Activated CD4-positive, alpha-beta T cell treated with anti-CD3 and anti-CD28 coated beads for 36 hours (primary cell): ENCODE measurements at regions of chr9 and their contacts with region 1.

Region 1: DNA sequence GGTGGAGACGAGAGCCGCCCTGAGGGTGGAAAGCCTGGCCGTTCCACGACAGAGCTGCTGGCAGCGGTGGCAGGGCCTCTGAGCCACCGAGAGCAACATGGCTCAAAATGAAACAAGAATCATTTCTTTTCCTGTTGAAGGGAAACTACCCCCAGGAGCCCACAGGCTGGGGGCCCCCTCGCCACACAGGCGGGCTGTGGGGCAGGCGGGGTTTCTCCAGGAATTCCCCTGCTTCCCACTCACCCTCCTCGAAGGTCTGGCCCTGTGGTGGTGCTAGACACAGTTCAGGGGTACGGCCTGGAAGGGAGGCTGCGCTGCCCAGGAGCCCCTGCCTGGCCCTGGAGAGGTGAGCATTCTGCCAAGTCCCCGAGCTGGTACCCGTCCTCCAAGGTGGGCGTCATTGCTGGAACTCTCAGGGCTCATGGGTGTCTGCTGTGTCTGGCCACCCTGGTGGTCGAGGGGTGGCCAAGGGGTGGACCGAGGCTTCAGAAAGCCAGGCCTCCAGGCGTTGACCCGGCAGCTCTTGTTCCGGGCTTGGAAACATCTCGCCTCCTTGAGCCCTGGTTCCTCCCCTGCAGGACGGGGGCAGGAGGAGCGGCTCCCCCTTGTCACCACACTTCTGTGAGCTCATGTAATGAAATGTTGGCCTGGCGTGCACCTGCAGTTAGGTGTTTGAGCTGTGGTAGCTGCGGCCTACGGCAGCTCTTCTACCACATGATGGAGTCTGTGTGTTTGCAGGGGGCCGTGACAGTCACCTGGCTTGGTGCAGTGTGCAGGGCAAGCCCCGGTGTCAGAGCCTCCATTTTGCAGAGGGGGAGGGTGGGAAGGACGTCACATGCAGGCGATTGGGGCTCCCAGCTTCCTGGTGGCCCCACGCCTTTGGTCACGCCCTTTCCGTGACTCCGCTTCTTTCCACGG is 65.3 kb downstream of the RXRA start:
- DNase-seq: peak; percentile 89
- ATAC-seq: peak; percentile 69
- H3K4me3 Mint-ChIP-seq: peak overlapping the region; percentile 75
- H3K27ac Mint-ChIP-seq: peak overlapping the region; percentile 95
- H3K4me1 Mint-ChIP-seq: peaks cover 64% of the 10 kb centered on the region
- H3K27me3 Mint-ChIP-seq: peaks cover 11% of the 10 kb centered on the region

Region 2: GRCh38 chr9:134163353-134164196 is 228.0 kb before region 1 on chr9:
- CTCF ChIA-PET with region 1: no interaction called
- POLR2A ChIA-PET with region 1: interaction called, 4 read pairs
- intact Hi-C with region 1: loop called (anchors 1 to 2 kb)
- DNase-seq: peak; percentile 83
- ATAC-seq: peak; percentile 39
- H3K4me3 Mint-ChIP-seq: no peak overlapping the region
- H3K27ac Mint-ChIP-seq: no peak overlapping the region
- H3K4me1 Mint-ChIP-seq: peaks cover 2% of the 10 kb centered on the region
- H3K27me3 Mint-ChIP-seq: no peaks in the 10 kb centered on the region

Region 3: DNA sequence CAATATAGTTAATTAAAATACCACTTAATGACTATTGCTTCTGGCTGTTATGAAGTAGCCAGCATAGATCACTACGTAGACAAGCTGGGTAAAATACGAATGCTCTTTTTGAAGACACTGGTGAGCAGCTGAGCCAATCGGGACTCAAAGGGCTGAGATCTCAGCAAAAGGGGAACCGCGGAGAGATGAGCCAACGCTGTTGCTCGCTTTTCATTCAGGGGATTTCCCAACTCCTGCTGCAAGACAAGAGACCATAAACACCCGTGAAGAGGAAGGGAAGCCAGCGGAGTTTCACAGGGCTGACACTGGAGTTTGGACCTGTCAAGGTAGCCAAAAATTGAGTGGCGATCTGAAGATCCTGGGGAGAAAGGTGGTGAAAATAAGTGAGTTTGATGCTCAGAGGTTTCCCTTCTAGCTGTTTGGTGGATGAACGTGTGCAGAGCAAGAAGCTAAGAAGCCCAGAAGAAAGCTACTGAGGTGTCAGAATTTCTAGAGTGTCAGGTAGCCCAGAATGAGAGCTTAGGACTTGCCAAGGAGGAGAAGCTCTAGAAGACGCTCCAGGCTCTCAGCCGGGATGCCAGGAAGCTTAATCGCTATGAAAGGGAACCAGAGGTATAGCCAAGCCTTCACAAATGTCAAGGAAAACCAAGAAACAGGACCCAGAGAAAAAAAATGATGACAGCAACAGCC is 147.7 kb before region 1 on chr9:
- CTCF ChIA-PET with region 1: no interaction called
- POLR2A ChIA-PET with region 1: no interaction called
- intact Hi-C with region 1: no loop called
- DNase-seq: peak; percentile 67
- ATAC-seq: peak; percentile 95
- H3K4me3 Mint-ChIP-seq: no peak overlapping the region
- H3K27ac Mint-ChIP-seq: peak overlapping the region; percentile 37
- H3K4me1 Mint-ChIP-seq: peaks cover 8% of the 10 kb centered on the region
- H3K27me3 Mint-ChIP-seq: no peaks in the 10 kb centered on the region

Region 4: DNA sequence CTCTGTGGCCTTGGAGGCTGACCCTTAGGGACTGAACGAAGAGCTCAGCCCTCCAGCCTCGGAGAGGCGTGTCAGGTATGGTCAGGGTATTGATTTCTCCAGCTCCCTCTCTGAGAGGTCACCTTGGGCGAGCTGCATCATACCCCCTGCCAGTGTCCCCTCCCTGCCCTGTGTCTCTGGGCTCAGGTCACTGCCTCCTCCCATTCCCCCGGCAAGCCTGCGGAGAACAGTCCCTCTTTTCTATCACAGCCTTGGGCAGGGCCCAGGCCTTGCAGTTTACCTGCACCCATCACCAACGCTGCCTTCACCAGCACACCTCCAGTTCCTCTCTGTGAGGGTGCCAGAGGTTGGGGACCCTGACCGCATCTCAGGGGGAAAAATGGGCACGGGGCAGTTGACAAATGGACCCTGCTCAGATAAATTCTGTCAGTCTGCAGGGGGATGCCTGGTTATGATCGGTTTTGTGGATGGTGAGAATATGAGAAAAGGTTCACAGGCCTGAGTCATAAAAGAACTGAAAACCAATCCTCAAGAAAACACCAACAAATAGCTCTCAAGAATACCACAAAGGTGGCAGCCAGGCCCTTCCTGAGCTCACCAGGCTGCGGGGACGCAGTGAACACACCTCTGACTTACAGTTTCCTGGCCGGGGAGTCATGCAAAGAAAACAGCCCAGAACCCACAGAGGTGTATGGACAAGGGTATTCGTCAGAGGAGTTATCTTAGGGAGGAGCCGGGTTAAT is 90.0 kb before region 1 on chr9:
- CTCF ChIA-PET with region 1: no interaction called
- POLR2A ChIA-PET with region 1: interaction called, 4 read pairs
- intact Hi-C with region 1: loop called (anchors 1 to 5 kb)
- DNase-seq: peak; percentile 82
- ATAC-seq: peak; percentile 99
- H3K4me3 Mint-ChIP-seq: no peak overlapping the region
- H3K27ac Mint-ChIP-seq: no peak overlapping the region
- H3K4me1 Mint-ChIP-seq: peaks cover 10% of the 10 kb centered on the region
- H3K27me3 Mint-ChIP-seq: peaks cover 1% of the 10 kb centered on the region

Region 5: GRCh38 chr9:134325817-134326723 is 65.5 kb before region 1 on chr9 and contains the start of gene RXRA:
- CTCF ChIA-PET with region 1: no interaction called
- POLR2A ChIA-PET with region 1: interaction called, 3 read pairs
- intact Hi-C with region 1: loop called in 1 of 2 experiments (anchors 2 kb)
- DNase-seq: peak; percentile 68
- ATAC-seq: peak; percentile 48
- H3K4me3 Mint-ChIP-seq: peak within 1 kb of the TSS; percentile 55
- H3K27ac Mint-ChIP-seq: no peak within 1 kb of the TSS
- H3K4me1 Mint-ChIP-seq: peaks cover 3% of the 10 kb centered on the region
- H3K27me3 Mint-ChIP-seq: peaks cover 5% of the 10 kb centered on the region
- total RNA-seq, gene RXRA: 17.6 to 20.9 TPM

Region 6: GRCh38 chr9:134407123-134407808 is 15.7 kb after region 1 on chr9:
- CTCF ChIA-PET with region 1: interaction called, 4 read pairs
- POLR2A ChIA-PET with region 1: interaction called, 3 read pairs
- intact Hi-C with region 1: loop called (anchors 1 kb)
- DNase-seq: peak; percentile 90
- ATAC-seq: peak; percentile 85
- H3K4me3 Mint-ChIP-seq: peak overlapping the region; percentile 62
- H3K27ac Mint-ChIP-seq: peak overlapping the region; percentile 60
- H3K4me1 Mint-ChIP-seq: peaks cover 36% of the 10 kb centered on the region
- H3K27me3 Mint-ChIP-seq: peaks cover 2% of the 10 kb centered on the region

Region 7: GRCh38 chr9:134419684-134420076 is 28.1 kb after region 1 on chr9:
- CTCF ChIA-PET with region 1: no interaction called
- POLR2A ChIA-PET with region 1: no interaction called
- intact Hi-C with region 1: no loop called
- DNase-seq: no peak
- ATAC-seq: peak; percentile 57
- H3K4me3 Mint-ChIP-seq: no peak overlapping the region
- H3K27ac Mint-ChIP-seq: no peak overlapping the region
- H3K4me1 Mint-ChIP-seq: no peaks in the 10 kb centered on the region
- H3K27me3 Mint-ChIP-seq: no peaks in the 10 kb centered on the region

Region 8: DNA sequence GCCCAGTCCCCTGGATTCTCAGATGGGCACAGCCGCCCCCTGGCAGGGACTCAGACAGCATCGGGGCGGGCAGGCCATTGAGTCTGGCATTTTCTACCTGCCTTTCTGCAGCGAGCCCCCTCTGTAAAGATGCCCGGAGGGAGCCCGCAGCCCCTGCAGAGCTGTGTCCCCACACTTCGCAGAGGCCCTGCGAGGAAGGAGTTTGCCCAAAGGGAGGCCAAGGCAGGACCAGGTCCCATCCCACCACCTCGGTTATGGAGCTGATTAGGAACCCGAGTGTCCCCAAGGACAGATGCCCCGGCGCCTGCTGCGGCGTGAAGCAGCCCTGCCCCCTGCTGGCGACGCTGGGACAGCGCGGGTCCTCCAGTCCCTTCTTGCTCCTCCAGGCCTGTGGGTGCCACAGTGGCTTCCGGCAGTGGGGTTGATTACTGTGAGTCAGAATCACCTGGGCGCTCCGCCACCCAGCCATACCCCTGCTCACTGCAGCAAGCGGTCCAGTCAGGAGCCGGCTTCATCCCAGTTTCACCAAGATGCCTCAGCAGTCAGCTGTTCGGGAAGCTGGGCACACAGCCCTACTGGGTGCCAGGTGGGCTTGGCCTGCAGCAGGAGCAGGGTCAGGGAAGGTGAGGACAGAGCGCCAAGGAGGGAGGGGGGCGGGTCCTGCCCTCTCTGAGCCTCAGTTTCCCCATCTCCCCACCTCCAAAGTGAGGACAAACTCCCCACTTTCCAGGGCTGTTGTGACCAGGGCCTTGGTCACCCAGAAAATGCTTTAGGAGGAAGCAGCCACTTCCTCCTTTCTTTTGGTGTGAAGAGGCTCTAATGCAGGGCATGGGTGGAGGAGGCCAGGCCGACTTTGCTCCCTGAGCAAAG is 51.8 kb after region 1 on chr9:
- CTCF ChIA-PET with region 1: interaction called, 3 read pairs
- POLR2A ChIA-PET with region 1: interaction called, 4 read pairs
- intact Hi-C with region 1: loop called (anchors 1 kb)
- DNase-seq: peak; percentile 94
- ATAC-seq: peak; percentile 100
- H3K4me3 Mint-ChIP-seq: no peak overlapping the region
- H3K27ac Mint-ChIP-seq: no peak overlapping the region
- H3K4me1 Mint-ChIP-seq: peaks cover 21% of the 10 kb centered on the region
- H3K27me3 Mint-ChIP-seq: peaks cover 9% of the 10 kb centered on the region

Region 9: DNA sequence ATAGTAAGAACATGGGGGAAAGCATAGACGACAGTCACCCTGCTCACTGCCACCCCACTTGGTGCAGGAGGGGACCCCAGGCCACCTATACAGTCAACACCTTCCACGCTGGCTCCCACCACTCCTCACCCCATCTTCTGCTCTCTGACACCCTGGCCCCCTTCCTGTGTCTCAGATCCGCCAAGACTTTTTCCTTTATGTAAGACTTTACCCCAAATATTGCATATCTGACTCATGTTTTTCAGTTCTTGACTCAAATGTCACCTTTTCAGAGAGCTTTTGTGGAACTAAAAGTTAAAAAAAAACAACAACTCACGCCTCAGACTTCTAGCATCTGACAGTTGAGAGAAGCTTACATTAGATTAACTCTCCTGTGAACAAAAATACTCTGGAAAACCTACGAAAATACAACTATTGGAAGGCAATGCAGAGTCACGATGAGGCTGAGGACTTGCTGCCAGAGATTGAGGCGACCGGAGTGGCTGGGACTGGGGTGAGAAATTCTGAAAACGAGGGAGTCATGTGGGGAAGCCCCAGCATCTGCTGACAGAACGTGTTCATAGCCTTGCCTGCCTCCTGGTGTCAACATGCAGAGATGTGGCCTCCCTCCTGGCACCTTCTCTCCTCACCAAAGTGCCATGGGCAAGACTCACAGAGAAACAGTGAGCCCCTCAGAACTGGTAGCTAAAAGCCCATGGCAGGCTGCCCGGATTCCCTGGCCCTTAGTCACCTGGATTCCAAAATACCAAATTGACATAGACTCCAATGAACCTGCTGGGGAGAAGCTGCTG is 466.7 kb after region 1 on chr9:
- CTCF ChIA-PET with region 1: no interaction called
- POLR2A ChIA-PET with region 1: no interaction called
- intact Hi-C with region 1: loop called in 1 of 2 experiments (anchors 2 kb)
- DNase-seq: peak; percentile 82
- ATAC-seq: peak; percentile 97
- H3K4me3 Mint-ChIP-seq: peak overlapping the region; percentile 19
- H3K27ac Mint-ChIP-seq: peak overlapping the region; percentile 89
- H3K4me1 Mint-ChIP-seq: peaks cover 17% of the 10 kb centered on the region
- H3K27me3 Mint-ChIP-seq: peaks cover 25% of the 10 kb centered on the region

Region 10: GRCh38 chr9:135343837-135344522 is 952.4 kb after region 1 on chr9:
- CTCF ChIA-PET with region 1: no interaction called
- POLR2A ChIA-PET with region 1: no interaction called
- intact Hi-C with region 1: no loop called
- DNase-seq: peak; percentile 76
- ATAC-seq: peak; percentile 42
- H3K4me3 Mint-ChIP-seq: no peak overlapping the region
- H3K27ac Mint-ChIP-seq: no peak overlapping the region
- H3K4me1 Mint-ChIP-seq: no peaks in the 10 kb centered on the region
- H3K27me3 Mint-ChIP-seq: peaks cover 6% of the 10 kb centered on the region